ENCODE measurements at regions of chr10 and their contacts with region 1.

Region 1: GRCh38 chr10:93352638-93353383 is 129.3 kb downstream of the MYOF start:
- H3K4me3 ChIP-seq: no peak overlapping the region
- H3K27ac ChIP-seq: no peak overlapping the region
- H3K4me1 ChIP-seq: no peaks in the 10 kb centered on the region
- CTCF ChIP-seq: no peak

Region 2: DNA sequence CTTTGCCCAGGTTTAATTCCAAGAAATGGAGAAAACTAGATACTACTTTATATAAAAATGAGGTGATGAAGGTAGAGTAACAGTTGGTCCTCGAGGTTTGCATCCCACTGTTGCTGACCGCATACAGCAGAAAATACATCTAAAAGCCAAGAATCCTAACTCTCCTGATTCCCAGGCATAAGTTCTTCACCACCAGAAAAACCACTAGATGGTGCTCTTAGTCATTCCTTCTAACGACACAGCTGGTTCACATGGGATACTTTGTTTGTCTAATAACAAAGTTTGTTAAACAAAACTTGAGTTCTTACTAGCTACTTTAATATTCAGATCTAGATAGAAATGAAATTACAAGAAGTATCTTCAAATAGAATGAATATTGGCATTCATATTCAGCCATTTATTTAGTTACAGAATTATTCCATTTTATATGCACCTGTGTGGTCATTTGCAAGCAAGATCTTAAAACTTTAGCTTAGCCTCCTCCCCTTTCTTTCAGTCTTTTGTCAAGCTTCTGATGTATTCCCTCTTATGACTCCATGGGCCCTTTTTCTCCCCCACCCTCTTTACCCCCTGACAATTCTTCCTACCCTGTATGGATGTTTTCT is 346.3 kb before region 1 on chr10:
- CTCF ChIA-PET with region 1: interaction called, 14 read pairs
- POLR2A ChIA-PET with region 1: no interaction called
- H3K4me3 ChIP-seq: no peak overlapping the region
- H3K27ac ChIP-seq: no peak overlapping the region
- H3K4me1 ChIP-seq: no peaks in the 10 kb centered on the region
- CTCF ChIP-seq: 0 out of 2 replicates have a peak, but pooled peaks have one; percentile 31

Region 3: DNA sequence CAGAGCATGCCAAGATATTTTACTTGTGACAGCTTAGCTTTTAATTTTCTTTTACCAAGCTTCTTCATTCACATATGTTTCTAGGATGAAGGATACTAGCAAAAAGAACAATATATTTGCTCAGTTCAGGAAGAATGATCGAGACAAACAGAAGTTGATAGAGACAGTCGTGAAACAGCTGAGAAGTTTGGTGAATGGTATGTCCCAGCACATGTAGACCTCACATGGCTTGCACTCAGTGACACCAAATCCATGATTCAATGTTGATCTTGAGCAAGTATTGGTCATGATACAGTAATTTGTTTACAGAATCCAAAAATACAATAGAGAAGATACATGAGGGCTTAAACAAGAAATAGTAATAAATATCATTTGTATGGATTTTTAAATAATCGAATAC is 294.7 kb before region 1 on chr10:
- CTCF ChIA-PET with region 1: no interaction called
- POLR2A ChIA-PET with region 1: no interaction called
- H3K4me3 ChIP-seq: no peak overlapping the region
- H3K27ac ChIP-seq: no peak overlapping the region
- H3K4me1 ChIP-seq: no peaks in the 10 kb centered on the region
- CTCF ChIP-seq: no peak

Region 4: DNA sequence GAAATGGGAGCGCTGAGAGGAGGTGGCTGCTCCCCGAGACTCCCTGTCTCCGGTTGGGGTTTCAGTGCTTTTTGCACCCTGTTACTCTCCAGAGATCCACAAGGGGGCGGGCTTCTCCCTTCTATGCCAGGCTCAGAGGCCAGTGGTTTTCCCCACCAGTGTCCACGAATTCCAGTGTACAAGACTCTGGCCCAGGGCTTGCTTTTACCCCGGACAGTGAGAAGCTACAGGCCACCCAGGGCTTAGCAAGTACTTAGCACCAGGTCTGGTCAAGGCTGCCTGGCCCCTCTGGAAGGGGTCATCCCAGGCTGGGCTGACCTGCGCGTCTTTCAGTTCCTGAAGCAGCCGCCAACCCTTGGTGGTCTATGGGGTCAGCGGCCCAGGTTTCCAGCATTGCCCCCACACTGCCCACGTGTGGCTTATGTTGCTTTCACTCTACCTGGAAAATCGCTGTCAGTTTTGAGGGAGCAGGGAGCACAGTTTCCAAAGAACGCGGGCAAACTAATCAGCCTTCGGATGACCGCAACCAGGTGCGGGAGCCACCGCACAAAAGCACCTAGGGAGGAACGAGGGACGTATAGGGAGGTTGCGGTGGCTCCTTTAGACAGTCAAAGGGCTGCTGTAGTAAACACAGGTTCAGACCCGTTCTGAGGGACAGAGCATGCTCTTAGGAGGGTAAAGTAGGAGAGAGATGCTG is 272.3 kb before region 1 on chr10:
- CTCF ChIA-PET with region 1: interaction called, 36 read pairs
- POLR2A ChIA-PET with region 1: no interaction called
- H3K4me3 ChIP-seq: no peak overlapping the region
- H3K27ac ChIP-seq: no peak overlapping the region
- H3K4me1 ChIP-seq: no peaks in the 10 kb centered on the region; the same call in none of the 2 replicates
- CTCF ChIP-seq: peak; percentile 54; the same call in 1 of the 2 replicates

Region 5: GRCh38 chr10:93337309-93337721 is 15.5 kb before region 1 on chr10:
- CTCF ChIA-PET with region 1: interaction called, 16 read pairs
- POLR2A ChIA-PET with region 1: no interaction called
- H3K4me3 ChIP-seq: no peak overlapping the region
- H3K27ac ChIP-seq: no peak overlapping the region
- H3K4me1 ChIP-seq: no peaks in the 10 kb centered on the region
- CTCF ChIP-seq: no peak

Region 6: DNA sequence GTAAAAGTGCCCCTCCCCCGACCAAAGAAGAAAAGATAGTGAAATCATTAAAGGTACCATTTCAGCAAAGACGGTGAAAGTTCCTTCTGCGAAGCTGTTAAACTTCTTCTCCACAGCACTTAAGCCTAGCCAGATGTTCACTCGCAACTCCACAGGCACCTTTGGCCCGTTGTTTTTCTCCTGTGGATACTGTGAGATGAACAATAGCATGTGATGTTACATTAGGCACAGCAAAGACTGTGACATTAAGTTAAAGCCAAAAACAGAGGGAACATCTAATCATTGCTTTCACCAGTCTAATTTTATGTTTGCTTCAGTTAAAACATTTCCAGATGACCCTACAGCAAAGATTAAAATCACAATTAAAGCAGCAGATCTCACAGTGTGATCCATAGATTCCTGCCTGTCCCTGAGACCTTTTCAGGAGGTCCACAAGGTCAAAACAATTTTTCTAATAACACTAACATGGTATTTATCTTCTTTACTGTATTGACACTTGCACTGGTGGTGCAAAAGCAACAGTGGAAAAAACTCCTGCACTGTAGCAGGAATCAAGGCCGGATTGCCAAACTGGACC is 16.9 kb after region 1 on chr10:
- CTCF ChIA-PET with region 1: interaction called, 23 read pairs
- POLR2A ChIA-PET with region 1: no interaction called
- H3K4me3 ChIP-seq: no peak overlapping the region
- H3K27ac ChIP-seq: no peak overlapping the region
- H3K4me1 ChIP-seq: no peaks in the 10 kb centered on the region
- CTCF ChIP-seq: no peak

Region 7: DNA sequence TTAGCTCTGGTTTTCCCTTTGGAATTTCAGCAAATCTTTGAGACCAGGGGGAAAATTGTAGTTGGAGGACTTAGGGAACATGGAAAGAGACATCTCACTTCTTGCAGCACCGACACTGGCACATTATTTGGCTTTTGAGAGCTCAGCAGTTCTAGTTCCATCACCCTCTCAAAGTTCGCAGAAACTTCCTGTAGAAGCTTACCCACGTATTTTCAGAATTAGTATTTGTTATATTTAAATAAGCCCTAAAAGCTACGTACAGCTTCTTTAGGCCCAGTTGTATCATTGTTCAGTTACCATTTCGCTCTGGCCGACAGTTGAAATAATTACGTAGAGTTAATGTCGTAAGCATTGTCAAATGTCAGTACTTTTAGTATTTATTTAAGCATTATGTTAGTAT is 157.0 kb after region 1 on chr10:
- CTCF ChIA-PET with region 1: interaction called, 14 read pairs
- POLR2A ChIA-PET with region 1: no interaction called
- H3K4me3 ChIP-seq: no peak overlapping the region
- H3K27ac ChIP-seq: no peak overlapping the region
- H3K4me1 ChIP-seq: no peaks in the 10 kb centered on the region
- CTCF ChIP-seq: no peak